ENCODE measurements at regions of chr3 and their contacts with region 1.

Region 1: DNA sequence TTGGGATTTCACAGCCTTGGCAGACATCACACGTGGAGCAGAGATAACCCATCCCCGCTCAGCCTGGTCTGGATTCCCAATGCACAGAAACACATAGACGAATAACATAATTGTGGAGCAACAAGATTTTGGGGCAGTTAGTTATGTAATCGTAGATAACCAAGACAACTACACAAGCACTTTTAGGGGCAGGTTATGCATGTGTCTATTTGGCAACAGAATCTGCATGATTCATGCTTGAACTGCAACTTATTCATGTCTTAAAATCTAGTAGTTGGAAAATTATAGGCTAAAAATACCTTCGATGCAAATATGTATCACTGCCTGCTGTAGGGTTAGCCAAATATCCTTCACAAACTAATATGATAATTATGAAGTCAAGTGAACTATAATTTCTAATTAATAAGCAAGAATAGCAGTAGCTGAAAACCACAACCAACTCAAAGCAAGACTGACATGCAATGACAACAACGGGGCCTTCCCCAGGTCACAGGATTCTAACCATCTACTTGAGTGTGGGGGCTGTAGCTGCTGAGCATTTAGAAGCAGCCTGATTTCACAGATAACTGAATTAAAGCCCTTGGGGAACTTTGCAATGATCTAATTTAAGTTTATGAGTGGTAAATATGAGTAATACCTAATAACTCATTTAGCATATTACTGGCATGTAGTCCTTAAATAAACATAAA is 31.1 kb downstream of the DGKG start:
- DNase-seq: peak; percentile 13
- ATAC-seq: peak; percentile 46; the same call in 1 of the 2 replicates
- H3K4me3 ChIP-seq: no peak overlapping the region
- H3K27ac ChIP-seq: peak overlapping the region; percentile 50
- H3K4me1 ChIP-seq: peaks cover 12% of the 10 kb centered on the region
- H3K27me3 ChIP-seq: peaks cover 48% of the 10 kb centered on the region
- CTCF ChIP-seq: no peak

Region 2: GRCh38 chr3:185950718-185951117 is 380.2 kb before region 1 on chr3:
- CTCF ChIA-PET with region 1: no interaction called
- POLR2A ChIA-PET with region 1: no interaction called
- intact Hi-C with region 1: no loop called
- DNase-seq: peak; percentile 59
- ATAC-seq: no peak; the same call in 1 of the 2 replicates
- H3K4me3 ChIP-seq: no peak overlapping the region
- H3K27ac ChIP-seq: no peak overlapping the region
- H3K4me1 ChIP-seq: peaks cover 8% of the 10 kb centered on the region
- H3K27me3 ChIP-seq: no peaks in the 10 kb centered on the region
- CTCF ChIP-seq: no peak

Region 3: DNA sequence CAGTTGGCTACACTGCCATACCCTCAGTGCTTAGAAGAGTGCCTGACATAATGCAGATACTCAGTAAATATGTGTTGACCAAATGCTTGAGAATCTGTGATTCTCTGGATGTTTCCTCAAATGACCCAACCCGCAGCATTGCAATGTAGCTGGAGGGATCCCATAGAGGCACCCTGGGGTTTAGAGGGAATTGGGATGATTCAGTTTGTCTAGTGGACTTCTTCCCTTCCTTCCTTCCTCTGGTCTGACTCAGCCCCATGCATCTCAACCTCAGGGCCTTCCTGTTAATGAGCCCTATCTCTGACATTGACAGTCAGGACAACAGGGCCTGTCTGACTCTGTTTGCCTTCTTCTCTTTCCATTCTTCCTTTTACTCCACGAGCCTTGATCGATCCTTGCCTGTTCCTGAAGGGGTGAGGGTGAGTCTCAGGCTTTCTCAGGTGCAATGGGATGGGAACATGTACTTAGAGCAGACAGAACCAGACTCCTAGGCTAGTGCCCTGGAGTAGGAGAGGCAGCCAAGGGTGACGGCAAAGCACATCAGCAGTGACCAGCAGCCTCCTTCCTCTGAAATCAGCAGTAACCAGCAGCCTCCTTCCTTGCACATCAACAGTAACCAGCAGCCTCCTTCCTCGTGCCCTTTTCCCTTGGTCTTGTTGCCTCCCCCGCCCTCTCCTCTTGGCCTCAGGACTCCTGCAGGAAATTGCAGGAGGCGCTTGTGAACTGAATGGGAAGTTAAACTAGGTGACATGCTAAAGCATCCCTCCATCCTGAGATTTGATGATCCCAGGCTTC is 47.1 kb before region 1 on chr3:
- CTCF ChIA-PET with region 1: no interaction called
- POLR2A ChIA-PET with region 1: no interaction called
- intact Hi-C with region 1: loop called (anchors 1 kb)
- DNase-seq: peak; percentile 80
- ATAC-seq: peak; percentile 77
- H3K4me3 ChIP-seq: no peak overlapping the region
- H3K27ac ChIP-seq: peak overlapping the region; percentile 93
- H3K4me1 ChIP-seq: peaks cover 40% of the 10 kb centered on the region
- H3K27me3 ChIP-seq: no peaks in the 10 kb centered on the region
- CTCF ChIP-seq: no peak

Measured in PC-3 (cell line).